HCT116 (cell line): ENCODE measurements at regions of chr1 and their contacts with region 1.

Region 1: DNA sequence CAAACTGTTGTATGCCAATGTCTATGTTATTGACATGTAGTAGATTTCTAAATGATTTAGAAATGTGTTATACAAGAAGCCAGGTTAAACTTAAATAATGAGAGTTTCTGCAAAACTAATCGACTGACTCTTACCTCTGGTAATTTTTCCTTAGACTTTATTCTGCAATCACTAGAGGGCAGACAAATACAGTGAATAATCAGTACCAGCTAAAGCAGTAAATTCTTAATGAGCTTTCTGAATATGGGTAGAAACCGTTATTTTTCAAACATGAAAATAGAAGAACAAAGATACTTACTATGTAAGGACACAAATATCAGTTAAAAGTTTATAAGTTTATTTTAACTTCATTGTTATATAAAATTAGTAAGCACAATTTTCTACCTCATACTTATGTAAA is 97.9 kb upstream of the RGS1 start:
- DNase-seq: no peak
- ATAC-seq: peak; percentile 73
- H3K4me3 ChIP-seq: no peak overlapping the region
- H3K27ac ChIP-seq: no peak overlapping the region
- H3K4me1 ChIP-seq: no peaks in the 10 kb centered on the region
- H3K27me3 ChIP-seq: no peaks in the 10 kb centered on the region
- CTCF ChIP-seq: peak in 2 of 3 experiments; percentile 66 to 82; a peak in 4 of 6 replicates
- POLR2A ChIP-seq: no peak
- RAD21 ChIP-seq: peak; percentile 88

Region 2: DNA sequence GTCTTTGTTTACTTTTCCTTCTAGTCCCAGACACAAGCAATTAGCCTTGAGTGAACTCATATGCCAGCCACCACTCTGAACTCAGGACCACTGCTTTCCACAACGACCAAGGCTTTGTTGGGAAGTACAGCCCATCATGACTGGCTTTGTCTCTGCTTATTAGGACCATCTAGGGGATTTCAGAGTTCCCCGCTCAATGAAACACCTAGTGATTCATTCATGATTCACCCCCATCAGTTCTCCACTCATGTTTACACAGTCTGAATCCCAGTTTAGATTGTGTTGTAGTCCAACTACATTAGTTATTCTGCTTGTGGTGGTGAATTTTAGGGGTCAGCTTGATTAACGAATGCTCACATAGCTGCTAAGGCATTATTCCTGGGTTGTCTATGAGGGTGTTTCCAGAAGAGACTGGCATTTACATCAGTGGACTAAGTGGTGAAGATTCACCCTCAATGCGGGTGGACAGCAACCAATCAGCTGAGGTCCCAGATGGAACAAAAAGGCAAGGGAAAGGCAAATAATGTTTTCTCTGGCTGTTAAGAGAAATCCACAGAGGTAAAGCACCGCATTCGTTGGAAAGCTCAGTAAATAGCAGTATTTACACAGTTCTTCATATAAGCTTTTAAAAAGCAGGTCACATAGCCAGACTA is 38.1 kb before region 1 on chr1:
- CTCF ChIA-PET with region 1: no interaction called
- POLR2A ChIA-PET with region 1: no interaction called
- RAD21 ChIA-PET with region 1: no interaction called
- intact Hi-C with region 1: no loop called
- DNase-seq: no peak
- ATAC-seq: peak; percentile 46; the same call in 1 of the 2 replicates
- H3K4me3 ChIP-seq: no peak overlapping the region
- H3K27ac ChIP-seq: no peak overlapping the region
- H3K4me1 ChIP-seq: peaks cover 2 to 18% of the 10 kb centered on the region in 2 experiments; a peak in 2 of 4 replicates
- H3K27me3 ChIP-seq: no peaks in the 10 kb centered on the region
- CTCF ChIP-seq: no peak
- POLR2A ChIP-seq: no peak
- RAD21 ChIP-seq: no peak

Region 3: DNA sequence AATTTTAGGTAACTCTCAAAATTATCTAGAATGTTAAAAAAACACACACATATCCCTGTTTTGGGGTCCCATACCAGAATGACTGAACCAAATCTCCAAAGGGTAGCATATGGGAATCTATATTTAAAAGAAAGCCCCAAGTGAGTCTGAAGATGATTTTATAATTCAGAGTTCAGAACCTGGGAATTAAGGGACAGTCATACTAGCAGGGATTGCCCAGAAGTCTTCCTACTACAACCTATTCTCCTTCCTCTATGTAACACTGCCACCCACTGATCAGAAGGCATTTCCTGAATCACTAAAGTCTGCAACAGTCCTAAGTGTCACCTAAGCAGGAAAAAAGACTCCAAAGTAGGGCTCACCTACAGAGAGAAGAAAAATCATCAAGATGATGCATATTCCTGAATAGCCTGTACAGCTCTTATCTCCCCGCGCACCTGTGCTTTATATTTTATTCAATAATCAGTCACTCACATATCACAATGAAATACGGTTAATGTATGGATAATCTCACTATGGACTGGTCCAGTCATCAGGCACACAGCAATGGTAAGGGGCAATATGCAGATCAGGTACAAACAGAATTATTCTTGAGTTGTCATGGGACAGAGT is 102.8 kb after region 1 on chr1:
- CTCF ChIA-PET with region 1: interaction called, 12 read pairs
- POLR2A ChIA-PET with region 1: no interaction called
- RAD21 ChIA-PET with region 1: no interaction called
- intact Hi-C with region 1: loop called (anchors 1 kb)
- DNase-seq: peak; percentile 42
- ATAC-seq: peak; percentile 98
- H3K4me3 ChIP-seq: no peak overlapping the region
- H3K27ac ChIP-seq: no peak overlapping the region
- H3K4me1 ChIP-seq: no peaks in the 10 kb centered on the region
- H3K27me3 ChIP-seq: no peaks in the 10 kb centered on the region
- CTCF ChIP-seq: peak; percentile 29 to 73 (median 57); a peak in 4 of 6 replicates
- POLR2A ChIP-seq: no peak
- RAD21 ChIP-seq: peak; percentile 91

Region 4: GRCh38 chr1:192808518-192809306 is 331.1 kb after region 1 on chr1 and contains the start of gene RGS2:
- CTCF ChIA-PET with region 1: interaction called, 12 read pairs
- POLR2A ChIA-PET with region 1: no interaction called
- RAD21 ChIA-PET with region 1: interaction called, 3 read pairs
- intact Hi-C with region 1: loop called (anchors 2 kb)
- DNase-seq: peak; percentile 77
- ATAC-seq: peak; percentile 96
- H3K4me3 ChIP-seq: peak within 1 kb of the TSS; percentile 91 to 93
- H3K27ac ChIP-seq: peak within 1 kb of the TSS; percentile 70
- H3K4me1 ChIP-seq: peaks cover 13 to 37% of the 10 kb centered on the region in 2 experiments; a peak in 3 of 4 replicates
- H3K27me3 ChIP-seq: no peaks in the 10 kb centered on the region
- CTCF ChIP-seq: peak in 2 of 3 experiments; percentile 18 to 37; a peak in 1 of 6 replicates
- POLR2A ChIP-seq: peak; percentile 92
- RAD21 ChIP-seq: peak; percentile 18; the same call in 1 of the 2 replicates
- total RNA-seq, gene RGS2: 21.1 TPM

Region 5: GRCh38 chr1:193031438-193031837 is 553.8 kb after region 1 on chr1:
- CTCF ChIA-PET with region 1: interaction called, 8 read pairs
- POLR2A ChIA-PET with region 1: no interaction called
- RAD21 ChIA-PET with region 1: no interaction called
- intact Hi-C with region 1: loop called (anchors 1 kb)
- DNase-seq: no peak
- ATAC-seq: peak; percentile 61
- H3K4me3 ChIP-seq: no peak overlapping the region
- H3K27ac ChIP-seq: no peak overlapping the region
- H3K4me1 ChIP-seq: no peaks in the 10 kb centered on the region
- H3K27me3 ChIP-seq: no peaks in the 10 kb centered on the region
- CTCF ChIP-seq: peak; percentile 24 to 62 (median 41); a peak in 5 of 6 replicates
- POLR2A ChIP-seq: no peak
- RAD21 ChIP-seq: peak; percentile 59

Region 6: GRCh38 chr1:194295685-194296084 is 1818.1 kb after region 1 on chr1:
- CTCF ChIA-PET with region 1: no interaction called
- POLR2A ChIA-PET with region 1: no interaction called
- RAD21 ChIA-PET with region 1: no interaction called
- intact Hi-C with region 1: loop called (anchors 10 kb)
- DNase-seq: peak; percentile 33
- ATAC-seq: peak; percentile 92
- H3K4me3 ChIP-seq: no peak overlapping the region
- H3K27ac ChIP-seq: no peak overlapping the region
- H3K4me1 ChIP-seq: peaks cover 0 to 4% of the 10 kb centered on the region in 2 experiments; a peak in 1 of 4 replicates
- H3K27me3 ChIP-seq: no peaks in the 10 kb centered on the region
- CTCF ChIP-seq: peak; percentile 29 to 64 (median 57); a peak in 5 of 6 replicates
- POLR2A ChIP-seq: no peak
- RAD21 ChIP-seq: peak; percentile 77